ENCODE measurements at regions of chr15 and their contacts with region 1.

Region 1: DNA sequence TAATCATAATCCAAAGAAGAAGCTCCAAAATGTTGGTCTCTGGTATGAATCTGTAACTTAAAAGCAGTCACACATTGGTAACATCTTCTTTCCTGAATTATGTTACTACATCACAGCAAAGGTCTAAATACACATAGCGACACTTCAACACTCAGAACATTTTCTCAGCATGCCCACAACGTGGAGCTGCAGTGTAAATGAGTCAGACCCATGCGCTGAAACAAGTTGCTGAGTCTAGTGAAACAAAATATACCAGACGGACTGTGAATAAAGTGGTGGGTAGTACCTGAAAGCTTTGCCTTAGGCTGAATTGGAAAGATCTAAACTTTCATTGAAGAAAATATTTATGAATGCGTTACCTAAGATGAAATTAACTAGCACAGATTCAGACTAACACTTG is 33.2 kb upstream of the GOLGA8B start:
- DNase-seq: no peak

Region 2: GRCh38 chr15:33330931-33331330 is 1285.7 kb before region 1 on chr15:
- intact Hi-C with region 1: no loop called
- DNase-seq: no peak

Region 3: GRCh38 chr15:34927726-34928125 is 311.1 kb after region 1 on chr15:
- intact Hi-C with region 1: loop called (anchors 5 kb)
- DNase-seq: no peak

Measured in cardiac septum (tissue), 1 donor.